ENCODE measurements at regions of chr5 and their contacts with region 1.

Region 1: GRCh38 chr5:55691265-55692105 is 20.6 kb downstream of the SLC38A9 start:
- DNase-seq: no peak
- ATAC-seq: peak; percentile 65 to 86 (median 73)
- H3K4me3 ChIP-seq: peak overlapping the region in 3 of 10 donors; percentile 11 to 19 (median 19)
- H3K27ac ChIP-seq: peak overlapping the region in 6 of 10 donors; percentile 5 to 52 (median 30)
- H3K4me1 ChIP-seq: peaks cover 6 to 34% (median 21%) of the 10 kb centered on the region in 9 donors
- H3K27me3 ChIP-seq: no peaks in the 10 kb centered on the region
- CTCF ChIP-seq: peak; percentile 42 to 83 (median 72)

Region 2: DNA sequence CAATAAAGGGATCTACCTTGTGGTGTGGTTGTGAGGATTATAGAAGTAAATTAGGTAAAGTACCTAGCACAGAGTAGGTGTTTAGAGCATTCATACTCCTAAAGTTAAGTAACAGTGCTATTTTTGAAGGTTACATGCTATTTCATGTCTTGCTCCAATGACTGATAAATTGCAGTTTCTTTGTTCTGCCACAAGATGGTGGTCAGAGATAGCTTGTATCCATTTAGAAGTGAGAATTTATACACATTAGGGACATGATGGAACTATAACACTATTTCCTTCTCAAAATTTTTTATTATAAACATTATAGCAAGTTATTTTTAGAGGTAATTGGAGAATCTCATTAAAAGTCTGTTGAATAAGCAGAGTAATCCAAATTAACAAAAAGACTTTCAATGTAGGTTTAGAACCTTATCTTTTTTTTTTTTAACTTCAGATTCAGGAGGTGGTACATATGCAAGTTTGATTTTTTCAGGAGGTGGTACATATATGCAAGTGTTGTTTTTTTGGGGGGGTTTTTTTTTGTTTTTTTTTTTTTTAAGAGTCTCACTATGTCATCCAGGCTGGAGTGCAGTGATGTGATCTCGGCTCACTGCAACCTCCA is 366.6 kb before region 1 on chr5:
- intact Hi-C with region 1: loop called in 1 of 10 experiments (anchors 5 kb)
- DNase-seq: no peak
- ATAC-seq: peak in 2 of 8 donors; percentile 52 to 54
- H3K4me3 ChIP-seq: no peak overlapping the region
- H3K27ac ChIP-seq: no peak overlapping the region
- H3K4me1 ChIP-seq: peaks cover 0 to 18% (median 6%) of the 10 kb centered on the region in 9 donors
- H3K27me3 ChIP-seq: no peaks in the 10 kb centered on the region
- CTCF ChIP-seq: peak; percentile 27 to 69 (median 61)

Region 3: DNA sequence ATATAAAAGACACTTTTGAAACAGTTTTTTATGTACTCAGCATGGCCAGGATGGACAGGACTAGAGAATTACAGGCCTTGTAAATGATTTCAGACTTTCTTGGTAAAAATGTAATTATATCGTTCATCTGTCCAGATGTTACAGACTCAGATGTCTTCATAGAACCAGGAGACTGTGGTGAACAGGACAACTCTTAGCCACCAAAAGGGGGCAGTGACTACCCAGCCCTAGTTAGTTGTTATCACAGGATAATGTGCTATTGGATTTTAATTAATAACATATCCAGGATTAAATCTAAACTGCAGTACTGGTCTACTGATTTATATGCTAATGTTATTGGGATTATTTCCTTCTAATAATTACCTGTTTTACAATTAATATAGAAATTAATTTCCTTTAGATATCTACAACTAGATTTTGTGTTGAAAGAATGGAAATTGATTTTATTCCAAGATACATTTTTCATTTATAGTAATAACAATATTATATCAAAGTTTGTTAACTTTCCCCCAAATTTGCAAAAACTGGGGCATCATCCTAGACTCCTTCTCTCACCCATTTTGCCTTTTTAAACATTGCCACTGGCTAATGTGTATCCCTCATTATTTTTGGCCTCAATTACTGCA is 284.3 kb before region 1 on chr5:
- intact Hi-C with region 1: loop called (anchors 1 to 5 kb)
- DNase-seq: peak in 1 of 2 donors; percentile 20
- ATAC-seq: peak in 7 of 8 donors; percentile 53 to 90 (median 85)
- H3K4me3 ChIP-seq: no peak overlapping the region
- H3K27ac ChIP-seq: no peak overlapping the region
- H3K4me1 ChIP-seq: peaks cover 0 to 16% (median 7%) of the 10 kb centered on the region in 9 donors
- H3K27me3 ChIP-seq: no peaks in the 10 kb centered on the region
- CTCF ChIP-seq: peak; percentile 55 to 92 (median 80)

Region 4: DNA sequence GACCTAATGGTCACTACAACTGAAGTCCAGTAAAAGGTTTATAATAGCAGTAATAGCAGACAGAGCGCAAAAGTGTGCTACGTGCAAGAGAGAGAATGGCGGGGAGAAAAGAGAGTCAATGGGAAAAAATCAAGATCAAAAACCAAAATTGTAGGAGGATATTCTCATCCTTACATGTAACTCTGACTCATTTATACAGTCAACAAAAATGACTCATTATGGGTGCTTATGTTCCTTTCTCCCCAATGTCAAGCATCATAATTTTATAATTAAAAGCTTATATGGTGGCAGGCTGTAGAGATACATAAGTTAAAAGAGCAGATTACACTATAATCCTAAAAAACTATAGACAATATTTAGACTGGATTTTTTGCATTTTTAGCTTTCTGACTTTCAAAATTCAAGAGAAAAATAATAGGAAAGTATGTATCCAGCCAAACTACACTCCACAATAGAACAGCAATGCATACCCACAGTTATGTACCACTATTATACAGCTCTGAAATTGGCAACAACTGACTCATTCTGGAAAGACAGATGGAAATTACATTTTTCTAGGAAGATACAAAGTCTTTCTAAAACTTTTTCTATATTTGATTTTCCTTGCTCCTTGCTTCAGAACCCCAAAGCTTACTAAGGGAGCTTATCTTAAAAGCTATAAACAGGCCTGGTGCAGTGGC is 235.1 kb before region 1 on chr5:
- intact Hi-C with region 1: no loop called
- DNase-seq: no peak
- ATAC-seq: no peak
- H3K4me3 ChIP-seq: no peak overlapping the region
- H3K27ac ChIP-seq: no peak overlapping the region
- H3K4me1 ChIP-seq: peaks cover 0 to 48% (median 20%) of the 10 kb centered on the region in 9 donors
- H3K27me3 ChIP-seq: no peaks in the 10 kb centered on the region
- CTCF ChIP-seq: no peak

Region 5: GRCh38 chr5:55636683-55637082 is 54.8 kb before region 1 on chr5:
- intact Hi-C with region 1: loop called in 1 of 10 experiments (anchors 2 kb)
- DNase-seq: peak in 1 of 2 donors; percentile 54
- ATAC-seq: peak in 7 of 8 donors; percentile 36 to 80 (median 56)
- H3K4me3 ChIP-seq: no peak overlapping the region
- H3K27ac ChIP-seq: peak overlapping the region; percentile 11 to 91 (median 80)
- H3K4me1 ChIP-seq: peaks cover 3 to 53% (median 45%) of the 10 kb centered on the region in 9 donors
- H3K27me3 ChIP-seq: no peaks in the 10 kb centered on the region
- CTCF ChIP-seq: no peak

Measured in heart right ventricle (tissue), 16 donors.